Activated CD4-positive, alpha-beta T cell treated with anti-CD3 and anti-CD28 coated beads for 36 hours (primary cell): ENCODE measurements at regions of chr11 and their contacts with region 1.

Region 1: DNA sequence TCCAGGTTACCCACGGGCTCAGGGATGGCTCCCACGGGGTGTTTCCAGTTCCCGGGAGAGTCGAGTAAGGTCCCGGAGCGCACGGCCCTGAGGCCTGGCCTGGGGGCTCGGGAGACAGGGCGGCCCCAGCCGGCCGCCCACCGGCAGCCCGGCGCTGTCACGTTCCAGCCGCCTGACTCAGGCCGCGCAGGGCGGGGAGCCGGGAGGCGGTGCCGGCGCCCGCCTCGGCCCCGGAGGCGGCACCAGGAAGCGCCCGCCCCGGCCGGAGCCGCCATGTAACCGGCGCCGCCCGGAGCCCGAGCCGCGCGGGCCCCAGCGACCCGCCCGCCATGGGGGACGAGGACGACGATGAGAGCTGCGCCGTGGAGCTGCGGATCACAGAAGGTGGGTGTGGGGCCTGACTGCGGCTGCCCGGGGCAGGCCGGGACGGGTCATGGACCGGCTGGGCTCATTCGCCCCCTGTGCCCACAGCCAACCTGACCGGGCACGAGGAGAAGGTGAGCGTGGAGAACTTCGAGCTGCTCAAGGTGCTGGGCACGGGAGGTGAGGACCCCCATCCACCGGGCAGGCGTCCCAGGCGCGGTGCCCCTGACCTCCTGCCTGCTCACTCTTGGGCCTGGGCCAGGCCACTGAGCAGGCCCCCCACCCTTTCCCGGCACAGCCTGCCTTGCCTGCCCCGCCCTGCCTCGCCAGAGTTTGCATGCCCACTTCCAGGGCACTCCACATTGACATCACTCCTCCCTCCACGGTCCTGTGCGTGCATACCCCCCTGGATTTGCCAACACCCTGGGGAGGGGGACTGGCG is at the start of gene RPS6KA4:
- DNase-seq: peak; percentile 80
- ATAC-seq: peak; percentile 69
- H3K4me3 Mint-ChIP-seq: peak within 1 kb of the TSS; percentile 85
- H3K27ac Mint-ChIP-seq: peak within 1 kb of the TSS; percentile 56
- H3K4me1 Mint-ChIP-seq: peaks cover 36% of the 10 kb centered on the region
- H3K27me3 Mint-ChIP-seq: no peaks in the 10 kb centered on the region
- total RNA-seq, gene RPS6KA4: 22.0 to 30.2 TPM

Region 2: DNA sequence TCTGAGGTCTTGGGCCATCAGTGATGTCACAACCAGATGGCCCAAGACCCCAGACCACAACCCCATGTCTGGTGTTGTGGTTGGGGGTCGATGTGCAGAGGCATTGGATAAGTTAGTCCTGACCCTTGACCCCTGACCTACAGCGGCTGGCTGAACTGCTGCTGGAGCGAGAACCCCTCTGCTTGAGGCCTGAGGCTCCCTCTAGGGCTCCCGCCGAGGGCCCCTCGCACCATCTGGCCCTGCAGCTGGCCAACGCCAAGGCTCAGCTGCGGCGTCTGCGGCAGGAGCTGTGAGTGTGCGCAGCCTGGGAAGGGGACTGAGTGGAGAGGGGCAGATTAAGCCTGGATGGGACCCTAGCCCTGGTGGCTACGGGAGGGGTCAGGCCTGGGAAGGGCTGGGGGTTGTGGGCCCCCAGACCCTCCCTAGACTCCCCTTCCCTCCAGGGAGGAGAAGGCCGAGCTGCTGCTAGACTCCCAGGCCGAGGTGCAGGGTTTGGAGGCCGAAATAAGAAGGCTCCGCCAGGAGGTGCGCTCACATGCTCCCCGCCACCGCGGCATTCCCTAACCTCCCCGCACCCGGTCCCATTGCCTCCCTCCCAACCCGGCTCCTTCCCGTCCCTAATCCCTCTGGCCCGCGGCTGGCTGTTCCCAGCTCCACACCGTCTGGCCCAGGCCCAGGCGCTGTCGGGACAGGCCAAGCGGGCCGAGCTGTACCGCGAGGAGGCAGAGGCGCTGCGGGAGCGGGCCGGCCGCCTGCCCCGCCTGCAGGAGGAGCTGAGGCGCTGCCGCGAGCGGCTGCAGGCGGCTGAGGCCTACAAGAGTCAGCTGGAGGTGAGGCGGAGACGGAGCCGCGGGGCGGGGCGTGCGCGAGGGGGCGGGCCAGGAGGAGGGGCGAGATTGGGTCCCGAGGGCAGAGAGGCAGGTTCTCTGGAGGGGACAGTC is 17.0 kb before region 1 on chr11:
- CTCF ChIA-PET with region 1: interaction called, 7 read pairs
- POLR2A ChIA-PET with region 1: no interaction called
- intact Hi-C with region 1: loop called (anchors 1 to 2 kb)
- DNase-seq: peak; percentile 96
- ATAC-seq: peak; percentile 77
- H3K4me3 Mint-ChIP-seq: no peak overlapping the region
- H3K27ac Mint-ChIP-seq: no peak overlapping the region
- H3K4me1 Mint-ChIP-seq: peaks cover 28% of the 10 kb centered on the region
- H3K27me3 Mint-ChIP-seq: no peaks in the 10 kb centered on the region

Region 3: DNA sequence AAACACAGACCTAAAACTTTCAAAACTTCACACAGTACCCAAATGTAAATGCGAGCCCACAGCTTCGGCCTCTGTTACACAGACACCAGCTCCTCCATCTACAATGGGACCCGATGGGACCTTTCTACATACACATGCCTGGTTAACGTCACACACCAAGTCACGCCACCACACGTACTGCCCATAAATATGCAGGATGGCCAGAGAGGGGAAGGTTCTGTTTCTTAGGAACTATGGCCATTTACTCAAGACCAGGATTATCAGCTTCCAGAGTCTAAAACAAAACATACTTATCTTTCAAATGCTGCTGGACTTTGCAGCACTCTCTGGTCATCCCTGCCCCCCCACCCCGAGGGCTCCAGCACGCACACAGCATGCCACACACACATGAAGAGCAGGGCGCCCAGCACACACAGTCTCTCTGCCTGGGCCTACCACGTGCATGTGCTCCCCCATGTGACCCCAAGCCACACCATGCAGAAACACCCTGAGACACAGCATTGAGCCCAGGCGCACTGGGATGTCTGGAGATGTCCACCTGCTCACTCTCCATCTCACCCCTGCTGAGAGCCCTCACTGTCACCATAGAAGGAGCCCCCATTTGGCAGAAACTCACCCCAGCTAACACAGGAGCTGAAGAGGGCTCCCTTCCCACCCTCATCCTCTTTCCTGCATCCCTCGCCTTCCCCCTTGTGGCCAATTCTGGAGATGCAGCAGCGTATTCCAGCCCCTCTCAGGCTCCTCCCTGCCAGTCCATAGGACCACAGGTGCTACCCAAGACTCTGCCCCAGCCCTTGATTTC is 293.7 kb after region 1 on chr11:
- CTCF ChIA-PET with region 1: interaction called, 3 read pairs
- POLR2A ChIA-PET with region 1: no interaction called
- intact Hi-C with region 1: loop called in 1 of 2 experiments (anchors 5 kb)
- DNase-seq: peak; percentile 87
- ATAC-seq: peak; percentile 75
- H3K4me3 Mint-ChIP-seq: no peak overlapping the region
- H3K27ac Mint-ChIP-seq: no peak overlapping the region
- H3K4me1 Mint-ChIP-seq: peaks cover 7% of the 10 kb centered on the region
- H3K27me3 Mint-ChIP-seq: peaks cover 3% of the 10 kb centered on the region

Region 4: DNA sequence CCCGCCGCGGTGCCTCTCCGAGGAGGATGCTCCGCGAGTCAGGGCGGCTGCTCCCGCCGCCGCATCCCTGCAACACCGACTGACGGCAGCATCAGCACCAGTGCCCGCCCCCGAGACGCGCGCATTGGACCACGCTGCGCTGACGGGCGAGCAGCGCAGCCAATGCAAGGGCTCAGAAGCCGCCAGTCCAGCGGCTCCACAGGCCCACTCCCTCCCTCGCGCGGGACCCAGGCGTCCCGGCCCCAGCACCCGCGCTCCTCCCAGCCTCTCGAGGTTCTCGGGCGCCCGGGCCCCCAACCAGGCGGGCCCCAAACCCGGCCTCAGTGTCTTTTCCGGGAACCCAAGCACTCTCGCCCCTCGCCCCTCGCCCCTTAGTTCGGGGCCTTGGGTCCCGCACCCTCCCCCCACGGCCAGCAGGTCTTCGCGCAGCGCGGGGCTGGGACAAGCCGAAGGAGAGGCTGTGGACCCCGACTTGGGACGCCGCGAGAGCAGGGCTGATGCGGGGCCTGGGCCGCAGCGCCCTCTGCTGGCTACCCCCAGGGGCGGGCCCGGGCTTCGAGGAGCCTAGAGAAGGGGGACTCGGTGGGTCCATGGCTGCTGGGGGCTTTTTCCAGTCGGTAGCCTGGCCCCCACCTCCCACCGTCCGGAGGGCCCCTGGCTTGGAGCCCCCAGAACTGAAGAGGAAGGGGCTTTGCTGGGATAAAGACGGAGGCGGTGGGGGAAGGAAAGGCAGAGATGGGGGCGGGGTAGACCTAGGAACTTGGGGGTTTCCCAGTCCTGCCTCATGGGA is 364.2 kb after region 1 on chr11 and contains the start of gene NRXN2:
- CTCF ChIA-PET with region 1: no interaction called
- POLR2A ChIA-PET with region 1: no interaction called
- intact Hi-C with region 1: loop called in 1 of 2 experiments (anchors 1 kb)
- DNase-seq: peak; percentile 94
- ATAC-seq: peak; percentile 99
- H3K4me3 Mint-ChIP-seq: peak within 1 kb of the TSS; percentile 46
- H3K27ac Mint-ChIP-seq: no peak within 1 kb of the TSS
- H3K4me1 Mint-ChIP-seq: peaks cover 11% of the 10 kb centered on the region
- H3K27me3 Mint-ChIP-seq: peaks cover 19% of the 10 kb centered on the region
- total RNA-seq, gene NRXN2: 0.18 to 0.39 TPM

Region 5: GRCh38 chr11:64742889-64743590 is 383.9 kb after region 1 on chr11:
- CTCF ChIA-PET with region 1: no interaction called
- POLR2A ChIA-PET with region 1: no interaction called
- intact Hi-C with region 1: loop called in 1 of 2 experiments (anchors 2 kb)
- DNase-seq: peak; percentile 86
- ATAC-seq: peak; percentile 47
- H3K4me3 Mint-ChIP-seq: peak overlapping the region; percentile 73
- H3K27ac Mint-ChIP-seq: no peak overlapping the region
- H3K4me1 Mint-ChIP-seq: peaks cover 25% of the 10 kb centered on the region
- H3K27me3 Mint-ChIP-seq: peaks cover 5% of the 10 kb centered on the region